SK-N-SH (cell line): ENCODE measurements at regions of chr10 and their contacts with region 1.

Region 1: DNA sequence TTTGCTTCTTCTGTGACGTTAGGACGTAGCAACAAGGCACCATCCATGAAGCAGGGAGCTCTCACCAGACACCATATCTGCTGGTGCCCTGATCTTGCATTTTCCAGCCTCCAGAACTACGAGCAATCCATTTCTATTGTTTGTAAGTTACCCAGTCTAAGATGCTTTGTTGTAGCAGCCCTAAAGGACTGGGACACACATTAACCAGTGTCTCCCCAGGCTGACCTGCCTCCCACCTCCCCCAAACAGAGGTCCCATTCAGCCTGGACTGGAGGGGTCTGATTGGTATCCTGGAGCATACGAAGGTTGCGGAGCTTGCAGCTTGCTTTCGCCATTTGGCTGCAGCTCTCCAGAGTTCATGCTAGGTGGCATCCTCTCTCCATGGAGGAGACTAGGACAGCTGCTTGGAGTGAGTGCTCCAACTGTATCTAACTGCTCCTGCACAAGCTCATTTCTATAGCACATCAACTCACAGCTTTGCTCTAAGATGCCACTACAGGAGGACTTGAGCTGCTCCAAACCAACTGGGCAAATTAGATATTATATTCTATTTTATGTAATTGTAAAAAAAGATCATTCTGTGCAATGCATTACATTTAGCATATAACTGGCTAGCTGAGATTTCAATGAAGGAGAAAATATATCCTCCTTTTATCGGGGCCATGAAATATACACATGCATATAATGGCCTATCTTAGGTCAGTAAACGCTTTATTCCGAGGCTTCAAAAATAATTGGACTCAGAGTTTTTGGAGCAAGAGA is 8.0 kb upstream of the GRK5 start:
- DNase-seq: peak; percentile 78
- H3K4me3 ChIP-seq: no peak overlapping the region
- H3K27ac ChIP-seq: no peak overlapping the region
- H3K4me1 ChIP-seq: peaks cover 0 to 9% of the 10 kb centered on the region in 2 experiments; a peak in 2 of 4 replicates
- H3K27me3 ChIP-seq: no peaks in the 10 kb centered on the region
- CTCF ChIP-seq: peak; percentile 74
- EP300 ChIP-seq: no peak
- RAD21 ChIP-seq: peak; percentile 98

Region 2: DNA sequence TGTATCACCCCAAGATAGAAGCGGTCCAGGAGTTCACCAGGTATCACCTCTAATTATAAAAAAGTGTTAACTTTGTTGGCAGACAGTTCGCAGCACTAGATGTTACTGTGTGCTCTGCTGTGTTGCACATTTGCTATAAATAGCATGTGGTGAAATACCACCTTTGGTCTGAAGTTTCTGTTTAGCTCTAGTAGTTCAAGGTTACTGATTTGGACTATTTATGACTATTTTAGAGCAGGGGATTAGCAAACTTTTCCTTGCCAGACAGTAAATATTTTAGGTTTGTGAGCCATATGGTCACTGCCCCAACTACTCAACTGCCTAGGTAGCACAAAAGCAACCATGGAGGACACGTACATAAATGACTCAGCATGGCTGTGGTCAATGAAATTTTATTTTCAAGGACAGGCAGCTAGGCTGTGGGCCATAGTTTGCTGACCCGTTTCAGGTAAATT is 79.0 kb before region 1 on chr10:
- CTCF ChIA-PET with region 1: no interaction called
- POLR2A ChIA-PET with region 1: no interaction called
- DNase-seq: no peak
- H3K4me3 ChIP-seq: no peak overlapping the region
- H3K27ac ChIP-seq: no peak overlapping the region
- H3K4me1 ChIP-seq: no peaks in the 10 kb centered on the region
- H3K27me3 ChIP-seq: no peaks in the 10 kb centered on the region
- CTCF ChIP-seq: no peak
- EP300 ChIP-seq: no peak
- RAD21 ChIP-seq: no peak

Region 3: GRCh38 chr10:119178372-119179119 is 20.9 kb before region 1 on chr10 and contains the start of gene PRDX3:
- CTCF ChIA-PET with region 1: interaction called, 12 read pairs
- POLR2A ChIA-PET with region 1: interaction called, 3 read pairs
- DNase-seq: peak; percentile 97
- H3K4me3 ChIP-seq: peak within 1 kb of the TSS; percentile 81 to 97
- H3K27ac ChIP-seq: peak within 1 kb of the TSS; percentile 82 to 98
- H3K4me1 ChIP-seq: peaks cover 8 to 18% of the 10 kb centered on the region in 2 experiments; a peak in 3 of 4 replicates
- H3K27me3 ChIP-seq: no peaks in the 10 kb centered on the region
- CTCF ChIP-seq: 0 out of 2 replicates have a peak, but pooled peaks have one; percentile 17
- EP300 ChIP-seq: no peak
- RAD21 ChIP-seq: no peak
- polyA plus RNA-seq, gene PRDX3: 193 and 278 TPM in 2 replicates

Region 4: DNA sequence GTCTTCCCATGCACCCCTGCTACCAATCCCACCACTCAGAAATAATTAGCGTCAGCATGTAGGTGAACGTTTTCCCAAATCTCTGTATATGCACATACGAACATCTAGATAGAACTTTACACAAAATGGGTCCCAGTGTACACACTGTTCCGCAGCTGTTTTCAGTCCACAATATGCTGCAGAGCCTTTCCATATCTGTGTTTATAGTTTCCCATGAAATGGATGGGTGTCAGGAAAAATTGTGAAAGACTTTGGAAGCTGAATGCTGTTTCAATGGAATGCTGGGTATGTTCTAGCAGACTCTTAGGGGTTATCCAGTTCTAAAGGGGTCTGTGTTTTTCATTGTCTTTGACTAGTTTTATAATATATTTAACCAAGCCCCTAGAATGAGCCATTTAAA is 21.8 kb after region 1 on chr10:
- CTCF ChIA-PET with region 1: no interaction called
- POLR2A ChIA-PET with region 1: no interaction called
- DNase-seq: no peak
- H3K4me3 ChIP-seq: no peak overlapping the region
- H3K27ac ChIP-seq: no peak overlapping the region
- H3K4me1 ChIP-seq: peaks cover 7 to 32% of the 10 kb centered on the region in 2 experiments; a peak in 3 of 4 replicates
- H3K27me3 ChIP-seq: no peaks in the 10 kb centered on the region
- CTCF ChIP-seq: no peak
- EP300 ChIP-seq: no peak
- RAD21 ChIP-seq: no peak

Region 5: GRCh38 chr10:119421887-119422681 is 222.7 kb after region 1 on chr10:
- CTCF ChIA-PET with region 1: interaction called, 51 read pairs
- POLR2A ChIA-PET with region 1: no interaction called
- DNase-seq: peak; percentile 91
- H3K4me3 ChIP-seq: no peak overlapping the region
- H3K27ac ChIP-seq: peak overlapping the region in 1 of 2 experiments; percentile 53; a peak in 2 of 4 replicates
- H3K4me1 ChIP-seq: peaks cover 0 to 40% of the 10 kb centered on the region in 2 experiments; a peak in 1 of 4 replicates
- H3K27me3 ChIP-seq: no peaks in the 10 kb centered on the region
- CTCF ChIP-seq: no peak
- EP300 ChIP-seq: peak in 1 of 2 experiments; percentile 56; a peak in 1 of 4 replicates
- RAD21 ChIP-seq: no peak

Region 6: GRCh38 chr10:119489991-119490326 is 290.5 kb after region 1 on chr10:
- CTCF ChIA-PET with region 1: interaction called, 64 read pairs
- POLR2A ChIA-PET with region 1: no interaction called
- DNase-seq: no peak
- H3K4me3 ChIP-seq: no peak overlapping the region
- H3K27ac ChIP-seq: no peak overlapping the region
- H3K4me1 ChIP-seq: no peaks in the 10 kb centered on the region; a peak in 1 of 4 replicates
- H3K27me3 ChIP-seq: no peaks in the 10 kb centered on the region
- CTCF ChIP-seq: no peak; the same call in 1 of the 2 replicates
- EP300 ChIP-seq: no peak
- RAD21 ChIP-seq: no peak